HCT116 (cell line): ENCODE measurements at regions of chr17 and their contacts with region 1.

Region 1: DNA sequence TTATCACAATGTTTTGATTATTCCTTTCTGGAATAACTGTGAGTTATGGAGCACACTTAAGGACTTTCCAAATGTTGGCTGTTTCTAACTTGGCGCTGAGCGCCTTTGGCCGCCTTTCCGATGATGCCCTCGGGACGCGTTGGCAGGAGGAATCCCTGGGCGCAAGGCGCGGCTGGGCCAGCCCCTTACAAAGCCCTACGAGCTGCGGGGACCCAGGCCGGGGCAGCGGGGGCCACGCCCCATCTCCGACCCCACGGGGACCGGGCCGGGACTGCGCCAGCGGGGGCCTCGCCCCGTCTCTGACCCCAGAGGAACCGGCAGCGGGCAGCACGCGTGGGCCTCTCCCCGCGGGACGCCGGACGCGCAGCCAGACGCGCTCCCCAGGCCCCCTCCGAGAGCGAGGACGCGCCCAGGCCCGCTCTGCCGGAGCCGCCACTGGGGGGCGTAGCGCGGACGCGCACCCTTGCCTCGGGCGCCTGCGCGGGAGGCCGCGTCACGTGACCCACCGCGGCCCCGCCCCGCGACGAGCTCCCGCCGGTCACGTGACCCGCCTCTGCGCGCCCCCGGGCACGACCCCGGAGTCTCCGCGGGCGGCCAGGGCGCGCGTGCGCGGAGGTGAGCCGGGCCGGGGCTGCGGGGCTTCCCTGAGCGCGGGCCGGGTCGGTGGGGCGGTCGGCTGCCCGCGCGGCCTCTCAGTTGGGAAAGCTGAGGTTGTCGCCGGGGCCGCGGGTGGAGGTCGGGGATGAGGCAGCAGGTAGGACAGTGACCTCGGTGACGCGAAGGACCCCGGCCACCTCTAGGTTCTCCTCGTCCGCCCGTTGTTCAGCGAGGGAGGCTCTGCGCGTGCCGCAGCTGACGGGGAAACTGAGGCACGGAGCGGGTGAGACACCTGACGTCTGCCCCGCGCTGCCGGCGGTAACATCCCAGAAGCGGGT is at the start of gene GAA:
- DNase-seq: peak; percentile 68
- ATAC-seq: peak; percentile 90
- H3K4me3 ChIP-seq: peak within 1 kb of the TSS; percentile 71 to 99
- H3K27ac ChIP-seq: peak within 1 kb of the TSS; percentile 83
- H3K4me1 ChIP-seq: peaks cover 27 to 33% of the 10 kb centered on the region in 2 experiments
- H3K27me3 ChIP-seq: no peaks in the 10 kb centered on the region
- CTCF ChIP-seq: peak in 2 of 3 experiments; percentile 69 to 83; a peak in 5 of 6 replicates
- POLR2A ChIP-seq: peak; percentile 79
- RAD21 ChIP-seq: no peak
- total RNA-seq, gene GAA: 131 TPM

Region 2: GRCh38 chr17:80082403-80083135 is 18.7 kb before region 1 on chr17:
- CTCF ChIA-PET with region 1: interaction called, 42 read pairs
- POLR2A ChIA-PET with region 1: interaction called, 3 read pairs
- RAD21 ChIA-PET with region 1: no interaction called
- intact Hi-C with region 1: no loop called
- DNase-seq: peak; percentile 75
- ATAC-seq: peak; percentile 90
- H3K4me3 ChIP-seq: peak overlapping the region; percentile 2 to 43
- H3K27ac ChIP-seq: no peak overlapping the region
- H3K4me1 ChIP-seq: peaks cover 0 to 13% of the 10 kb centered on the region in 2 experiments; a peak in 2 of 4 replicates
- H3K27me3 ChIP-seq: no peaks in the 10 kb centered on the region
- CTCF ChIP-seq: peak; percentile 78 to 93 (median 85)
- POLR2A ChIP-seq: no peak
- RAD21 ChIP-seq: peak; percentile 86

Region 3: GRCh38 chr17:80116276-80116920 is 15.1 kb after region 1 on chr17:
- CTCF ChIA-PET with region 1: interaction called, 18 read pairs
- POLR2A ChIA-PET with region 1: interaction called, 5 read pairs
- RAD21 ChIA-PET with region 1: interaction called in 1 of 2 experiments, 3 read pairs
- intact Hi-C with region 1: no loop called
- DNase-seq: no peak
- ATAC-seq: no peak
- H3K4me3 ChIP-seq: no peak overlapping the region
- H3K27ac ChIP-seq: no peak overlapping the region
- H3K4me1 ChIP-seq: no peaks in the 10 kb centered on the region
- H3K27me3 ChIP-seq: no peaks in the 10 kb centered on the region
- CTCF ChIP-seq: no peak
- POLR2A ChIP-seq: no peak
- RAD21 ChIP-seq: no peak

Region 4: DNA sequence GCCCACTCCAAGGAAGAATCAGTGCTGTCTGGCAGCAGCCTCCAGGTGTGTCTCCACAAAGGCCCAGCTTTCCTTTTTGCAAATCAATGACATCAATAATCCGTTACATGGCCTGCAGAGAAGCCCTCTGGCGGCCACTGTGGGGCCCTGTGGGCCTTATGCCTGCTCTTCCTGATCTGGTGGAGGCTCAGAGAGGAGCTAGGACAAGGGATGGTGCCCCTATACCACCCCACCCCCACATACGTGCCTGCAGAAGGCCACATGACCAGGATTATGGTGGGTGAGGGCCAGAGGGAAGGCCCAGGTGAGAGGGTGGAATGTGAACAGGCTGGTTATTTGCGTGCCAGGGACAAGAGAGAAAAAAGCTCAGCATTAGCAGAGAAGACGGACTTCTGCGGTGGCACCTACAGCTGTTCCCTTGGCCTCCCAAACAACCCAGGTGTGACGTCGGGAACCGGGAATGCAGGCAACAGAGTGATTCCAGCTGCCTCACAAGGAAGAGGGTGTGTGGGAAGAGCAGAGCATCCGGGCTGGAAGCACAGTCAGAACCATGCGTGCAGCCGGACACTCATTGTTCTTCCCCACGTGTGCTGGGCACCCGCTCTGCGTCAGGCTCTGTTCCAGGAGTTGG is 23.2 kb after region 1 on chr17:
- CTCF ChIA-PET with region 1: interaction called, 25 read pairs
- POLR2A ChIA-PET with region 1: interaction called, 5 read pairs
- RAD21 ChIA-PET with region 1: interaction called in 1 of 2 experiments, 5 read pairs
- intact Hi-C with region 1: no loop called
- DNase-seq: peak; percentile 29
- ATAC-seq: peak; percentile 92
- H3K4me3 ChIP-seq: no peak overlapping the region
- H3K27ac ChIP-seq: no peak overlapping the region
- H3K4me1 ChIP-seq: peaks cover 0 to 13% of the 10 kb centered on the region in 2 experiments; a peak in 1 of 4 replicates
- H3K27me3 ChIP-seq: 0 out of 2 replicates have a peak, but pooled peaks cover 6% of the 10 kb centered on the region
- CTCF ChIP-seq: peak; percentile 57 to 75 (median 69); a peak in 5 of 6 replicates
- POLR2A ChIP-seq: no peak
- RAD21 ChIP-seq: peak; percentile 50

Region 5: GRCh38 chr17:80252607-80253289 is 151.5 kb after region 1 on chr17:
- CTCF ChIA-PET with region 1: interaction called, 3 read pairs
- POLR2A ChIA-PET with region 1: no interaction called
- RAD21 ChIA-PET with region 1: no interaction called
- intact Hi-C with region 1: loop called (anchors 1 kb)
- DNase-seq: peak; percentile 46
- ATAC-seq: peak; percentile 90
- H3K4me3 ChIP-seq: no peak overlapping the region
- H3K27ac ChIP-seq: peak overlapping the region; percentile 3; the same call in 1 of the 2 replicates
- H3K4me1 ChIP-seq: peaks cover 31 to 49% of the 10 kb centered on the region in 2 experiments
- H3K27me3 ChIP-seq: no peaks in the 10 kb centered on the region
- CTCF ChIP-seq: peak; percentile 81 to 94 (median 91)
- POLR2A ChIP-seq: no peak
- RAD21 ChIP-seq: peak; percentile 92

Region 6: DNA sequence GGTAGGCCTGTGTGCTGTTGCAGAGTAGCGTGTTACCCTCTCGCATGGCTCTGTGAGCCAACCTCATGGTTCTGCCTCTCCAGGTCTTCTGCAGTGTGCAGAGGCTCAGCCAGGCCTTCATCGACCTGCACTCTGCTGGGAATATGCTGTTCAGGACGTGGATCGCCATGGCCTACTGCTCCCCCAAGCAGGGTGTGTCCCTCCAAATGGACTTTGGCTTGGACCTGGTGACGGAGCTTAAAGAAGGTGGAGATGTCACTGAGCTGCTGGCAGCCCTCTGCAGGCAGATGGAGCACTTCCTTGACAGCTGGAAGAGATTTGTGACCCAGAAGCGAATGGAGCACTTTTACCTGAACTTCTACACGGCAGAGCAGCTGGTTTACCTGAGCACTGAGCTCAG is 237.8 kb after region 1 on chr17:
- CTCF ChIA-PET with region 1: no interaction called
- POLR2A ChIA-PET with region 1: no interaction called
- RAD21 ChIA-PET with region 1: no interaction called
- intact Hi-C with region 1: no loop called
- DNase-seq: no peak
- ATAC-seq: no peak
- H3K4me3 ChIP-seq: no peak overlapping the region
- H3K27ac ChIP-seq: no peak overlapping the region
- H3K4me1 ChIP-seq: no peaks in the 10 kb centered on the region
- H3K27me3 ChIP-seq: no peaks in the 10 kb centered on the region
- CTCF ChIP-seq: no peak
- POLR2A ChIP-seq: no peak
- RAD21 ChIP-seq: no peak